Activated CD4-positive, alpha-beta memory T cell treated with anti-CD3 and anti-CD28 coated beads for 36 hours (primary cell): ENCODE measurements at regions of chr10 and their contacts with region 1.

Region 1: GRCh38 chr10:102342958-102343357 is 52.5 kb upstream of the NFKB2 start:
- DNase-seq: no peak
- H3K4me3 Mint-ChIP-seq: no peak overlapping the region
- H3K27ac Mint-ChIP-seq: peak overlapping the region; percentile 60
- H3K4me1 Mint-ChIP-seq: peaks cover 39% of the 10 kb centered on the region
- H3K27me3 Mint-ChIP-seq: no peaks in the 10 kb centered on the region

Region 2: GRCh38 chr10:102300278-102300843 is 42.6 kb before region 1 on chr10:
- CTCF ChIA-PET with region 1: no interaction called
- POLR2A ChIA-PET with region 1: interaction called, 4 read pairs
- intact Hi-C with region 1: loop called (anchors 1 kb)
- DNase-seq: no peak
- H3K4me3 Mint-ChIP-seq: peak overlapping the region; percentile 23
- H3K27ac Mint-ChIP-seq: peak overlapping the region; percentile 86
- H3K4me1 Mint-ChIP-seq: peaks cover 32% of the 10 kb centered on the region
- H3K27me3 Mint-ChIP-seq: no peaks in the 10 kb centered on the region